Activated CD4-positive, alpha-beta memory T cell treated with anti-CD3 and anti-CD28 coated beads for 36 hours (primary cell): ENCODE measurements at regions of chr1 and their contacts with region 1.

Region 1: DNA sequence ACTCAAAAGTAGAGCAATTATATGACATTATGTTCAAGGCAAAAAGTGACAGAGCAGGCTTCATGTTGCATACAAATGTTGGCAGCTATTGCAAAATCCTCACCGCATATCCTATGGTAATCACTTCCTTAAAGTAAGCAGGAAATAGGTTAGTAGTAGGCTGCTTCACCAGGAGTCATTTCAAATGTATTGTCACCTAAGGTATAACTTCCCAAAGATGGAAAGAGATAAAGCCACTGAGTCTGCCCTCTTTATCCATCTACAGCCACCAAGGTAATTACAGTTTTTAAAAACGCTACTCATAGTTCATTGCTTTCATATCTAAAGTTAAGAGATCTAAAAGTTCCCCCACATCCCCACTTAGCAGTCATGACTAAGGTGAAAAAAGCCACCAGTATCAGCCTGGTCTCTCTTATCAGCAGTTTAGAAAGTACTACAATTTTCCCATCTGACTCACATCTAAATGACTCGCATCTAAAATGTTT is 31.6 kb upstream of the UBE2U start:
- DNase-seq: no peak
- H3K4me3 Mint-ChIP-seq: no peak overlapping the region
- H3K27ac Mint-ChIP-seq: no peak overlapping the region
- H3K4me1 Mint-ChIP-seq: peaks cover 21% of the 10 kb centered on the region
- H3K27me3 Mint-ChIP-seq: peaks cover 26% of the 10 kb centered on the region

Region 2: GRCh38 chr1:64223329-64224151 is 51.7 kb after region 1 on chr1:
- CTCF ChIA-PET with region 1: no interaction called
- POLR2A ChIA-PET with region 1: no interaction called
- intact Hi-C with region 1: loop called (anchors 1 kb)
- DNase-seq: no peak
- H3K4me3 Mint-ChIP-seq: no peak overlapping the region
- H3K27ac Mint-ChIP-seq: peak overlapping the region; percentile 42
- H3K4me1 Mint-ChIP-seq: peaks cover 8% of the 10 kb centered on the region
- H3K27me3 Mint-ChIP-seq: peaks cover 16% of the 10 kb centered on the region

Region 3: GRCh38 chr1:64505232-64505943 is 333.5 kb after region 1 on chr1:
- CTCF ChIA-PET with region 1: no interaction called
- POLR2A ChIA-PET with region 1: no interaction called
- intact Hi-C with region 1: no loop called
- DNase-seq: peak; percentile 65
- H3K4me3 Mint-ChIP-seq: peak overlapping the region; percentile 76
- H3K27ac Mint-ChIP-seq: no peak overlapping the region
- H3K4me1 Mint-ChIP-seq: peaks cover 14% of the 10 kb centered on the region
- H3K27me3 Mint-ChIP-seq: peaks cover 8% of the 10 kb centered on the region